ENCODE measurements at regions of chr1 and their contacts with region 1.

Region 1: GRCh38 chr1:110645821-110646735 is 28.7 kb downstream of the KCNA3 start:
- DNase-seq: no peak
- ATAC-seq: peak in 2 of 4 experiments; percentile 30 to 46
- H3K4me3 ChIP-seq: no peak overlapping the region
- H3K4me3 Mint-ChIP-seq: peak overlapping the region in 2 of 3 donors; percentile 16 to 29
- H3K27ac ChIP-seq: peak overlapping the region; percentile 64
- H3K27ac Mint-ChIP-seq: peak overlapping the region in 1 of 2 donors; percentile 84
- H3K4me1 ChIP-seq: peaks cover 43 to 55% of the 10 kb centered on the region in 2 experiments
- H3K4me1 Mint-ChIP-seq: peaks cover 41 to 47% (median 42%) of the 10 kb centered on the region in 3 donors
- H3K27me3 ChIP-seq: no peaks in the 10 kb centered on the region
- H3K27me3 Mint-ChIP-seq: no peaks in the 10 kb centered on the region

Region 2: GRCh38 chr1:110663241-110663640 is 17.2 kb after region 1 on chr1:
- CTCF ChIA-PET with region 1: interaction called, 3 to 11 read pairs
- POLR2A ChIA-PET with region 1: interaction called, 4 to 7 read pairs
- DNase-seq: no peak
- ATAC-seq: no peak
- H3K4me3 ChIP-seq: no peak overlapping the region
- H3K4me3 Mint-ChIP-seq: no peak overlapping the region
- H3K27ac ChIP-seq: no peak overlapping the region
- H3K27ac Mint-ChIP-seq: peak overlapping the region; percentile 32 to 50
- H3K4me1 ChIP-seq: peaks cover 7 to 14% of the 10 kb centered on the region in 2 experiments
- H3K4me1 Mint-ChIP-seq: peaks cover 6 to 34% (median 32%) of the 10 kb centered on the region in 3 donors
- H3K27me3 ChIP-seq: no peaks in the 10 kb centered on the region
- H3K27me3 Mint-ChIP-seq: no peaks in the 10 kb centered on the region

Measured in T-cell (primary cell).